A673 (cell line): ENCODE measurements at regions of chr14 and their contacts with region 1.

Region 1: DNA sequence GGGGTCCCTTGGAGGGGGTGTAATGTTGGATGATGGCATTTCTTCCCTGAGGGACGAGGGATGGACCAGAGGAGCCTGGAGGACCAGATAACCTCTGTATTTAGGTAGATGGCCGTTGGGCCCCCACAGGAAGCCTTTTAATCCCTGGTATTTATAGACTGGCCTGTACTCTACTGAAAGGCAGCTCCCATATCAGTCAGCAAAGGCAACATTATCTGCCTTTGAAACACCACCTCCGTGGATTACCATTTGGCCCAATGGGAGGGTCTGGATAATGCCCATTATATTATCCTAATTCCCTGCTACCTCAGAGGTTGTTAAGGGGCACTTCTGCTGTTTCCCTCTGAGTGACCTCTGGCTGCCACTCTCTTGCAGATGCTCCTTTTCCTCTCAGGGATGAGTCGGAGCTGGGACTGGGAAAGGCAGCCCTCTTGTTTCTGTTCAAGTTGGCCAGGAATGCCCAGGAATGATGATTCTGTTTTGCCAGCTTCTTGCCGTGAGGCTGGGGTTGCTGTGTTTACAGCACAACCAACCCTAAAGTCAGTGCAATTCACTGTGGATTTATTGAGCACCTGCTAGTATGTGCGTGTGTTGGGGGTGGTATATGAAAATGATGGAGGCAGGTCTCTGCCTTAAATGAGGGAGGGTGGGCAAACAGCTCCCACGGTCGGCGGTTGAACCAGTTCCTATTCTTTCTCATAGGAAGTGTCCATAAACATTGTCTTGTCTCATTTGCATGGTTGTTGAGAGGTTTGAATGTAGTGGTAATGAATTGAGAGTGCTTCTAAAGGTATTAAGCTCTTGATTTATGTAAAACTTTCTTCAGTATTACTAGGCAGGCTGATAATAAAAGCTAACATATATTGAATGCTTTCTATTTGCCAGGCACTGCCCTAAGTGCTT is 18.1 kb downstream of the SUSD6 start:
- DNase-seq: no peak
- H3K4me3 ChIP-seq: no peak overlapping the region
- H3K27ac ChIP-seq: no peak overlapping the region
- H3K4me1 ChIP-seq: no peaks in the 10 kb centered on the region
- H3K27me3 ChIP-seq: no peaks in the 10 kb centered on the region
- CTCF ChIP-seq: no peak

Region 2: DNA sequence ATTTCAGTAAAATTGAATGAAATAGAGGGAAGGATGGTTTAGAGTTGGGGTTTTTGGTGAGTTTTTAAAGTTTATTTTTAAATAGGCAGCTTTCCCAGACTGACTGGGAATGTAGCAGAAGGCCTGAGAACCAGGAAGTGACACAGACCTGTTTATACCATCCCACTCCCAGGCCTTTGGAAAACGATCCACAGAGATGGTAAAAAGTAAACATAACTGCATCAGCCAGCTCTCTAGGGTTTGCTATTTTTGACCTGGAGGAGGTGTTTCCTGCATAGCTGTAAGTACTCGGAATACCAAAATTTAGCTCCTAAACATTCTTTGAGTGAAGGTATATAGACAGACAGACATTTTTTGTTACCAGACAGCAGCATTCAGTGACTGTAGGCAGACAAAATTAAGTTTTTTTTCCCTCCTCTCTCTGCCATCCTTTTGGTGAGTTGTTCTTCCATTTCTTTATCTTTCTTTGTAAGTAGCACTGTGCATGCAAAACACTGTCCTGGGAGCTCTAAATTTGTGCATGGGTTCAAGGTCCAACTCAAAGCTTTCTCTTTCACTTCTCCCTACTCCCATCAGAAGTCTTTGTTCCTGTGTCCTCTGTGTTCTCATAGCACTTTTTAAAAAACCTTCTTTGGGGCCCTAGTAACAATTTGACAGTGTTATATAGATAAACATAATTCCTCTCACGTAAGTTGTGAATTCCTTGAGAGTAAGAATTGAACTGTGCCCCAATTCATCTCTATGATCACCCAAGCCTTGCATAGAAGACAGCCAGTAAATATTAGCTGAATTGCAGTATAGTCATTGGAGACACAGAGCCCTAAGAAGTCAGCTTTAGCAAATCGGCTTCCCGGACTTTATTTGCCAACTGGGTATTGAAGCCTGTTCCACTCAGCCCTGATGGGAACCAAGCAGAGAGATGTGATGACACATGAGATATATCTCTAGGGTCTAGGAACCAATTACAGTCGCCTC is 19.3 kb after region 1 on chr14:
- CTCF ChIA-PET with region 1: no interaction called
- POLR2A ChIA-PET with region 1: no interaction called
- intact Hi-C with region 1: no loop called
- DNase-seq: no peak
- H3K4me3 ChIP-seq: no peak overlapping the region
- H3K27ac ChIP-seq: no peak overlapping the region
- H3K4me1 ChIP-seq: no peaks in the 10 kb centered on the region
- H3K27me3 ChIP-seq: no peaks in the 10 kb centered on the region
- CTCF ChIP-seq: no peak

Region 3: DNA sequence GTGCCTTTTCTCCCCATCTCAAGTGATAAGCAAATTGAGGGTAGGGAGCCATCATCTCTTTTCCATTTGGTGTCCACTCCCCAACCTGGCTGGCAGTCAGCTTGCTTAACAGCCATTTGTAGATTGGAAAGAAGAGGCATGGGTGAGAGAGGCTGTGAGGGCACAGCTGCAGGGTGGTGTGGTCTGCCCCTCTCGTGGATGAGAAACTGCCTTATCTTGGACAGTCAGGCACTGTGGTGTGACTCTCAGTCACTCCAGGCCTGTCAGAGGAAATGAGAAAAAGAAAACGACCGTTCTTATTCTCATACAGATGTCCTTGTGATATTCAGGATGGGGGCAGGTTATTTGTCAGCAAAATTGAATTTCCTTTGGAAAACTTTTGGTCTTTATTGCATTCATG is 72.4 kb after region 1 on chr14:
- CTCF ChIA-PET with region 1: no interaction called
- POLR2A ChIA-PET with region 1: no interaction called
- intact Hi-C with region 1: loop called (anchors 5 kb)
- DNase-seq: no peak
- H3K4me3 ChIP-seq: no peak overlapping the region
- H3K27ac ChIP-seq: peak overlapping the region; percentile 30
- H3K4me1 ChIP-seq: peaks cover 20% of the 10 kb centered on the region
- H3K27me3 ChIP-seq: no peaks in the 10 kb centered on the region
- CTCF ChIP-seq: no peak

Region 4: GRCh38 chr14:70052990-70053389 is 423.5 kb after region 1 on chr14:
- CTCF ChIA-PET with region 1: no interaction called
- POLR2A ChIA-PET with region 1: no interaction called
- intact Hi-C with region 1: no loop called
- DNase-seq: peak; percentile 41
- H3K4me3 ChIP-seq: no peak overlapping the region
- H3K27ac ChIP-seq: no peak overlapping the region
- H3K4me1 ChIP-seq: no peaks in the 10 kb centered on the region
- H3K27me3 ChIP-seq: peaks cover 12% of the 10 kb centered on the region
- CTCF ChIP-seq: no peak